SK-N-SH (cell line): ENCODE measurements at regions of chr6 and their contacts with region 1.

Region 1: DNA sequence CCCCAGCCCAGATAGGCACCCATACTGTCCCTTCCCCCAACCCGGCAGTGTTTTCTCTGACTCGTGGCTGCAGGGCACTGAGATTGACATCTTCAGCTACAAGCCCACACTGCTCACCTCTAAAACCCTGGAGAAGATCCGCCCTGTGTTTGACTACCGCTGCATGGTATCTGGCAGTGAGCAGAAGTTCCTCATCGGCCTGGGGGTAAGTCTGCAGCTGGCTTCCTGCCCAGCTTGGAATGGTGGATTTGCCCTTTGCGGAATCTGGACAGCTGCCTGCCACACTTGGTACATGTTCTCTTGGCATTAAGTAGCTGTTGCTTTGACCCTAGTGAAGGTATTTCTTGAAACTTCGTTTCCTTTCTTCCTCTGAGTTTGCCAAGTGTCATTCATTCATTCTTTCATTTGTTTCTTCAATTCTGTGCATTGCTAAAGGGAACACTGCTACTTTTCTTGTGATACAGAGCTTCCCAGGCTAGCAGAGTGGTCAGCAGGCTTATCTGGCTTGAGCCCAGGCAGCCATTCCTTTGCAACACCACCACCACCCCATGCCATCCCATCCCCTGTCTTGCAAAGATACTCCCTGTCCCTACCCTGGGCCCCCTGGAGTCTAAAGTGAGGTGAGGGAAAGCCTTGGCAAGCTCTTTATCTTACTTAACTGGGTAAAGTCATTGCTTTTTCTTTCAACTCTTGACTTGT is 26.1 kb downstream of the CCDC167 start:
- DNase-seq: peak; percentile 84
- H3K4me3 ChIP-seq: no peak overlapping the region
- H3K27ac ChIP-seq: peak overlapping the region in 1 of 2 experiments; percentile 88; a peak in 3 of 4 replicates
- H3K4me1 ChIP-seq: peaks cover 7 to 32% of the 10 kb centered on the region in 2 experiments; a peak in 3 of 4 replicates
- H3K27me3 ChIP-seq: no peaks in the 10 kb centered on the region
- CTCF ChIP-seq: no peak
- EP300 ChIP-seq: peak; percentile 23 to 85; a peak in 3 of 4 replicates
- RAD21 ChIP-seq: peak; percentile 35

Region 2: GRCh38 chr6:37483917-37484785 is 10.6 kb after region 1 on chr6:
- CTCF ChIA-PET with region 1: interaction called, 26 read pairs
- POLR2A ChIA-PET with region 1: no interaction called
- DNase-seq: peak; percentile 92
- H3K4me3 ChIP-seq: no peak overlapping the region; a peak in 1 of 4 replicates
- H3K27ac ChIP-seq: peak overlapping the region in 1 of 2 experiments; percentile 43; a peak in 2 of 4 replicates
- H3K4me1 ChIP-seq: peaks cover 0 to 29% of the 10 kb centered on the region in 2 experiments; a peak in 1 of 4 replicates
- H3K27me3 ChIP-seq: no peaks in the 10 kb centered on the region
- CTCF ChIP-seq: peak; percentile 71
- EP300 ChIP-seq: no peak
- RAD21 ChIP-seq: peak; percentile 91